Transverse colon (tissue), 4 donors: ENCODE measurements at regions of chr2 and their contacts with region 1.

Region 1: DNA sequence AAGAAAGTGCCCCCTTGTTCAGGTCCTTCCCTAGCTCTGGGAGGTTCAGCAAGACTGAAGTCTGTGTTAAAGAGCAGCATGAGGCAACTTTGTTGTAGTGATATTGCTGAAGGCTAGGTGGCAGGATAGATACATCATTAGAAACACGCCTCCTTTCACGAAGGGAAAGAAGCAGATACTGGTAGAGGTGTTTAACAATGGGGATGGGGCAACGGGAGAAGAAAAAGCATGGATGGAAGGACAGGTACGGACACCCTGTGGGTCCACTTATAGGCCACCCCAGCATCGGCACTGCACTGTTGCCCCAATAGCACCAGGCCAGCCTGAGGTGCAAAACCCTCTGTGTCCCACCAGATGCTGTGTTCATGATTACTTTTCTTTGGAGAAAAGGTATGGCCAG is 3.5 kb upstream of the IGFBP5 start:
- DNase-seq: no peak
- H3K4me3 ChIP-seq: no peak overlapping the region
- H3K27ac ChIP-seq: peak overlapping the region; percentile 36 to 94 (median 62)
- H3K4me1 ChIP-seq: peaks cover 0 to 45% (median 9%) of the 10 kb centered on the region in 4 donors
- H3K27me3 ChIP-seq: peaks cover 63% of the 10 kb centered on the region
- CTCF ChIP-seq: peak; percentile 44 to 54 (median 48)
- EP300 ChIP-seq: no peak
- POLR2A ChIP-seq: no peak

Region 2: DNA sequence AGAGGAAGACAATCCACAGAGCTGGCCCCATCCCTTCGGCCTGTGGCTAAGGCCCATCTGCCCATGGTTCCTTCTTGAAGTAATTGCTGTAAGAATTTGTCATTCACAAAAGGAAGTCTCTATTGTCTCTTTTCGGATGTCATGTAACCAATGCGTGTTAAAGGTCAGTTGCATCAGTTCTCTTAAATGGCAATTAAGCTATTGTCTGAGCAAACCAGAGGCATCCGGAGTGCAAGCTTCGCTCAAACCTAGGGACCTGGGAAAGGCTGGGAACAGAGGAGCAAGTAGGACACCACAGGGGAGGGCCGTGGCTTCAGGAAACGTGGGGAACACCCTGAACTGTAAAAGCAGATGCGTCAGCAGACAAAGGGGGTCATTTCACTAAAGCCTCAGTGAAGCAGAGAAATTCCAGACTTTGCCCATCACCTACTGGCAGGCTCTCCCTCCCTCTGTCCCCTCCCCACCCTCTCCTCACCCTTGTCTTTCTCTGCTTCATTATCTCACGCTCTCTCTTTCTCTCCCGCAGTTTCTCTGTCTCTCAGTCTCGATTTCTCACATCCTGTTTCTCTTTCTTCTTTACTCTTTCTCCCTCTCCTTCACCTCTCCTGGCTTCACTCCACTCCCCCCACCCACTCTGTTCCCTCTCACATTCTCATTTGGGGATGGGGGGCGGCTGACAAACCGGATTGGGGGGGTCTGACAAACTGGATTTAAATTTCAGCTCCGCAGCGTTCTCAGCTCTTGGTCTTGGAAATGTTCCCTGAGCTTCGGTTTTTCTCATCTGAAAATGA is 365.5 kb after region 1 on chr2:
- in situ Hi-C with region 1: no loop called
- intact Hi-C with region 1: loop called (anchors 10 kb)
- DNase-seq: no peak
- H3K4me3 ChIP-seq: no peak overlapping the region
- H3K27ac ChIP-seq: peak overlapping the region in 1 of 4 donors; percentile 57
- H3K4me1 ChIP-seq: no peaks in the 10 kb centered on the region
- H3K27me3 ChIP-seq: no peaks in the 10 kb centered on the region
- CTCF ChIP-seq: no peak
- EP300 ChIP-seq: peak; percentile 47
- POLR2A ChIP-seq: no peak

Region 3: DNA sequence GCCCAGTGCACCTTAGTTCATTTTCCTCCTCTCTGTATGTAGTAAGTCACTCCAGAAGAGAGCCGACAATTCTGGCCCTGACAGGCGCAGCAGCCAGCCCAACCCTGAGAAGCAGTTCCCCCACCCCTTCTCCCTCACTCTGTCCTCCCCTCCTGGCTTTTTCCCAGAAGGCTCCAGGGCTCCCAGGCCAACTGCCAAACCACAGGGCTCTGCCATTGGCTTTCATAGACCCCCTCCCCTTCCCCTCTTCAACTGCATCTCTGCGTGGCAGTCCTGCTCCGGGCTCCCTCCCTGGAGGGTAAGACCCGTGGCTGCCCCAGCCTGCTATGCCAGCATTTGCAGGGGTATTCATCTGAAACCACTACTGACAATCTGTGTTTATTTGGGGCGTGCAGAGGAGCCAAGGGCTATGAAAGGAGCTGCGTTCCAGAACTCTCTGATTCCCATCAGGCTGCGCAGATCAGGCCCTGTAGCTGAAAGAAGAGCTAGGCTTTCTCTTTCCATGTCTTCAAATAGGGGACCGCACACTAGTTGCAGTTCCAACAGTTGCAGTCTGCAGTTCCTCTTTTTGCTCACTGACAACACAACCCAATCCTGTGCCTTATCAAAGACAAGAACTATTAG is 549.5 kb after region 1 on chr2:
- in situ Hi-C with region 1: loop called in 1 of 4 experiments (anchors 10 kb)
- intact Hi-C with region 1: loop called (anchors 5 kb)
- DNase-seq: peak; percentile 50
- H3K4me3 ChIP-seq: no peak overlapping the region
- H3K27ac ChIP-seq: peak overlapping the region; percentile 72 to 87 (median 83)
- H3K4me1 ChIP-seq: peaks cover 3 to 21% (median 11%) of the 10 kb centered on the region in 4 donors
- H3K27me3 ChIP-seq: no peaks in the 10 kb centered on the region
- CTCF ChIP-seq: no peak
- EP300 ChIP-seq: no peak
- POLR2A ChIP-seq: no peak

Region 4: DNA sequence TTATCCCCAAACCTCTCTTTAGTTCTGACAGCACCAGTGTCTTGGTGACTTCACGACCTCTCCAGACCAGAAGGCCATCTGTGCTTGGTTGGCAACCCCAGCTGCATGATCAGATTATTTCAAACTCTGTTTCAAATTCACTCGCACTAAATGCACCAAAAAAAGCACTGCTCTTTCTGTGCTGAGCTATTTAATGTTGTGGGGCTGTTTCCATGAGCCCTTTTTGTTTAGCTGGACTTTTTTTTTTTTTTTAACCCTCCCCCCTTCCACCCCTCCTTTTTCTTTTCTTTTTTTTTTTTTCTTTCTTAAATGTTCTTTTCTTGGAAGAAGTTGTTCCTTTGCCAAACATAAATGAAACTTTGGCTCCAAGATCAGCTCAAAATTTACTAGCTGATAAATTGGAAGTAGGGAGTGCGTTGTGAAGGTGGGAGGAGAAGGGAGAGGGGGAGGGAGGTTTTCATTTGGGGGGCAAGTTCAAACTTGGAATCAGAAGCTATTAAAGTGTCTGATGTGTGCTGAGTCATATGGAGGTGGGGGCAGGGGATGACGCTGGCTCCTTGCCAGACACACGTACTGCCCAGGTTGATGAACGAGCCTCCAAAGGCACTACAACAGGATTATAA is 704.0 kb after region 1 on chr2:
- in situ Hi-C with region 1: loop called in 1 of 4 experiments (anchors 25 kb)
- intact Hi-C with region 1: no loop called
- DNase-seq: peak; percentile 15
- H3K4me3 ChIP-seq: no peak overlapping the region
- H3K27ac ChIP-seq: peak overlapping the region; percentile 47 to 84 (median 72)
- H3K4me1 ChIP-seq: peaks cover 0 to 7% (median 5%) of the 10 kb centered on the region in 4 donors
- H3K27me3 ChIP-seq: no peaks in the 10 kb centered on the region
- CTCF ChIP-seq: no peak
- EP300 ChIP-seq: no peak
- POLR2A ChIP-seq: no peak

Region 5: DNA sequence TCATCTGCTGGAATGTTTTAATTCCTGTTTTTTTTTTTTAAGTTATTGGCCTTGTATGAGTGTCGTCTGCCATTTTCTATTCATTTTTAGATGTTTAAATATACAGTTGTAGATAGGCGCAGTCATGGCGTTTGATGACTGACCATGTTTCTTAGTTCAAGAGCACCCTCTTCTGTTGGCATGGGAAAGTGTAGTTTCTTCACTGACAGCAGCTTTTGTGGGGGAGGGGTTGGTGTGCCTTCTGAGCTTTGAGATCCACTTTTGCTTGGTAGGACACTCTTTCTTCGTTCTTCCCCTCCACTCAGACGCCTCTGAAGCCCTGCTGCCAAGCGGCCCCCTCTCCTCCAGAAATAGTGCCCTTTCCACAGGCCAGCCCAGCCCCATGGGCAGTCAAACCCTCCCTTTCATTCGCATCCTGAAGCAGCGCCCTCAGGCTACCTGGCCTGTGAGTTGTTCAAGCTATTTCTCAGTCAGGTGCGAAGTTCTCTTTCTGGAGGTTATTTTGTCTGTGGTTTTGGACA is 811.9 kb after region 1 on chr2:
- in situ Hi-C with region 1: loop called in 3 of 4 experiments (anchors 10 to 25 kb)
- intact Hi-C with region 1: loop called (anchors 2 kb)
- DNase-seq: peak; percentile 26
- H3K4me3 ChIP-seq: no peak overlapping the region
- H3K27ac ChIP-seq: no peak overlapping the region
- H3K4me1 ChIP-seq: peaks cover 0 to 9% (median 2%) of the 10 kb centered on the region in 4 donors
- H3K27me3 ChIP-seq: no peaks in the 10 kb centered on the region
- CTCF ChIP-seq: peak; percentile 41 to 62 (median 51)
- EP300 ChIP-seq: no peak
- POLR2A ChIP-seq: no peak